ENCODE measurements at regions of chr18 and their contacts with region 1.

Region 1: DNA sequence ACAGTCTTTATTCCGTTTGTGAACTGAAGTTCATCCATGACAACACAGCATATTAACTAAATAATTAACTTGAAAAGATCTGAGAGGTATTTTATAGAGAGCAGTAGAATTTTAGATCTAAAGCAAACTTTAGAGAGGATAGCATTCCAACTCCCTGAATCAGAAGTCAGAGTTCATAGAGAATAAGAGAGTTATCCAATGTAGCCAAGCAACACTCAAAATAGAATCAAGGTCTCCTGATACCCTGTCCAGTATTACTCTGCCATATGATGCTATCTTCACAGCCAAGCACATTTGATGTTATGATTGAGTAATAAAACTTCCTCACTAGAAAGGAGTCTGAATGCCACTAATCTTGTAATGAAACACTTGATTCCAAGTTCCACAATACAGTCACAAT is 55.5 kb downstream of the RIT2 start:
- ATAC-seq: no peak
- H3K4me3 ChIP-seq: no peak overlapping the region
- H3K27ac ChIP-seq: no peak overlapping the region
- H3K4me1 ChIP-seq: peaks cover 2 to 19% of the 10 kb centered on the region in 2 donors

Region 2: GRCh38 chr18:42114310-42114943 is 945.6 kb before region 1 on chr18:
- in situ Hi-C with region 1: loop called in 1 of 9 experiments (anchors 25 kb)
- ATAC-seq: peak; percentile 83 to 96 (median 92)
- H3K4me3 ChIP-seq: no peak overlapping the region
- H3K27ac ChIP-seq: peak overlapping the region; percentile 54 to 66
- H3K4me1 ChIP-seq: peaks cover 6 to 31% of the 10 kb centered on the region in 2 donors

Region 3: GRCh38 chr18:43125471-43125870 is 65.5 kb after region 1 on chr18:
- in situ Hi-C with region 1: no loop called
- ATAC-seq: no peak
- H3K4me3 ChIP-seq: no peak overlapping the region
- H3K27ac ChIP-seq: no peak overlapping the region
- H3K4me1 ChIP-seq: peaks cover 0 to 7% of the 10 kb centered on the region in 2 donors

Measured in motor neuron (in vitro differentiated cells).